H1 (cell line): ENCODE measurements at regions of chr12 and their contacts with region 1.

Region 1: DNA sequence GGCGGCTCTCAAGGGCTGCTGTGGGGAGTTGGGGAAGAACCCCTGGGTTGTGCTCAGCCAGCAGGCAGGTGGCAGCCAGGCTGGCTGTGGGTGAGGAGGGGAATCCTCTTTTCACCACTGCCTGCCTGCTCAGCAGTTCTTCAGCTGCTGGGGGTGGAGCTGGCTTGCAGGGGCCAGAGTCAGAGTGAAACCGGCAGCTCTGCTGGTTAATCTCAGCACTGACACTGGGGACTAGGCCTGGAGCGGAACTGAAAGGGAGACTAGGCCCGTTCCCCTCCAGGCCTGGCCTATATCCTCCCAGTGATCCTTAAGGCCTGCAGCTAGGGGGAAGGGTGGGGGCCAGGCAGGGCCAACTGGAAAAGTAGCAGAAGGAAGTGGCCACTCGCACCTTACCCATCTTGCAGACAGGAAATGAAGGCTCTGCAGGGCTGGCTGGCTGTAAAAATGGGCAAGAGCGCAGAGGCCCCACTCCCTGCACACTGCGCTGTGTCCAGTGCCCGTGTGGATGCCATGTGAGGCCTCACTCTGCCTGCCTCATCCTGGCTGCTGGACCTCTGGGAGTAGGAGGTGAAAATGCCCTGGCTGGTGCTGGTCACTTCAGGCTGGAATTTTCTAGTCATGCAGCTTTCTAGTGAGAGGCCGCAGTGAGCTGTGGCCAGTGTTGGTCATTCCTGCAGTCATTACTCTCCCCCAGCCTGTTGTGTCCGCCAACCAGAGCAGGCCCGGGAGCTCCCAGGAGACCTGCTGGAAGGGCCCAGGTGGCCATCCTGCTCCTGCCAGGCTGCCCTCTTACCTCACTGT is 39.4 kb downstream of the SH2B3 start:
- DNase-seq: peak in 1 of 2 experiments; percentile 48
- H3K4me3 ChIP-seq: no peak overlapping the region
- H3K27ac ChIP-seq: peak overlapping the region; percentile 33; the same call in 1 of the 2 replicates
- H3K4me1 ChIP-seq: peaks cover 0 to 19% (median 10%) of the 10 kb centered on the region in 4 experiments; a peak in 6 of 7 replicates
- H3K27me3 ChIP-seq: no peaks in the 10 kb centered on the region
- CTCF ChIP-seq: no peak
- EP300 ChIP-seq: no peak
- POLR2A ChIP-seq: no peak
- RAD21 ChIP-seq: 0 out of 4 replicates have a peak, but pooled peaks of 1 of the 2 experiments have one; percentile 3

Region 2: DNA sequence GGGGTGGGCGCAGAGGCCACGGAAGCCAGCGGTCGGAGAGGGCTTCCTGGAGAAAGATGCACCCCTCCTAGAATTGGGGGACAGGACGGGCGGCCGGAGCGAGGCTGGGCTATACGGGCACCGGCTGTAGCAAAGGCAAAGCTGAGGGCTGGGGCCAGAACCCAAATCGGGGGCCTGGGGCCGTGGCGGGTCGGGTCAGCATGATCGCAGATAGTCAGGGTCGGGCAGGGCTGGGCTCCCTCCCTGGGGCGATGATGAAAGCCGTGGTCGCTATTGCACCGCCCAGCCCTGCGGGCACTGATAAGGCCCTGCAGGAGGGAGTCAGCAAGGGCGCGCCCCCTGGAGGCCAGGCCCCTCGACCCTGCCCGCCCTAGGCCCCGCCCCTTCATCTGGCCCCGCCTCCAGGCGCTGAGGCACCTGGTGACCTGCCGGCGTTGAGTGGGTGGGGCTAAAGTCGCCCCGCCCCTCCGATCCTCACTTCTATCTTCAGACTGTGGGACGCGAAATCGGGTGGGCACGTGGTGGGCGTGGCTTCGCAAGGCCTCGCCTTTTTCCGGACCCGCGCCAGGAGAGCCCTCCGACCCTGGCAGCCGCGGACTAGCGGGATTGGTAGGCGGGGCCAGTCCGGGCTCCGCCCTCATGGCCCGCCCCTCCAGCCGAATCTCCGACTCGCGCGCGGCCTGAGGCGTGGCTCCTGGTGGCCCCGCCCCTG is 39.8 kb before region 1 on chr12:
- CTCF ChIA-PET with region 1: interaction called, 838 read pairs
- POLR2A ChIA-PET with region 1: interaction called, 64 read pairs
- DNase-seq: peak; percentile 100
- H3K4me3 ChIP-seq: peak overlapping the region; percentile 54 to 93 (median 75)
- H3K27ac ChIP-seq: peak overlapping the region; percentile 87
- H3K4me1 ChIP-seq: peaks cover 5 to 48% (median 31%) of the 10 kb centered on the region in 4 experiments
- H3K27me3 ChIP-seq: no peaks in the 10 kb centered on the region
- CTCF ChIP-seq: peak; percentile 63 to 67 (median 66)
- EP300 ChIP-seq: no peak
- POLR2A ChIP-seq: peak in 1 of 2 experiments; percentile 71; a peak in 2 of 3 replicates
- RAD21 ChIP-seq: peak in 1 of 2 experiments; percentile 14; a peak in 2 of 4 replicates

Region 3: GRCh38 chr12:111893287-111893686 is 448.2 kb after region 1 on chr12:
- CTCF ChIA-PET with region 1: no interaction called
- POLR2A ChIA-PET with region 1: no interaction called
- DNase-seq: no peak
- H3K4me3 ChIP-seq: no peak overlapping the region
- H3K27ac ChIP-seq: no peak overlapping the region
- H3K4me1 ChIP-seq: no peaks in the 10 kb centered on the region
- H3K27me3 ChIP-seq: no peaks in the 10 kb centered on the region
- CTCF ChIP-seq: no peak
- EP300 ChIP-seq: no peak
- POLR2A ChIP-seq: no peak
- RAD21 ChIP-seq: no peak